Activated B cell treated with CpG ODN at 0.5 μM for 24 hours (primary cell): ENCODE measurements at regions of chr6 and their contacts with region 1.

Region 1: DNA sequence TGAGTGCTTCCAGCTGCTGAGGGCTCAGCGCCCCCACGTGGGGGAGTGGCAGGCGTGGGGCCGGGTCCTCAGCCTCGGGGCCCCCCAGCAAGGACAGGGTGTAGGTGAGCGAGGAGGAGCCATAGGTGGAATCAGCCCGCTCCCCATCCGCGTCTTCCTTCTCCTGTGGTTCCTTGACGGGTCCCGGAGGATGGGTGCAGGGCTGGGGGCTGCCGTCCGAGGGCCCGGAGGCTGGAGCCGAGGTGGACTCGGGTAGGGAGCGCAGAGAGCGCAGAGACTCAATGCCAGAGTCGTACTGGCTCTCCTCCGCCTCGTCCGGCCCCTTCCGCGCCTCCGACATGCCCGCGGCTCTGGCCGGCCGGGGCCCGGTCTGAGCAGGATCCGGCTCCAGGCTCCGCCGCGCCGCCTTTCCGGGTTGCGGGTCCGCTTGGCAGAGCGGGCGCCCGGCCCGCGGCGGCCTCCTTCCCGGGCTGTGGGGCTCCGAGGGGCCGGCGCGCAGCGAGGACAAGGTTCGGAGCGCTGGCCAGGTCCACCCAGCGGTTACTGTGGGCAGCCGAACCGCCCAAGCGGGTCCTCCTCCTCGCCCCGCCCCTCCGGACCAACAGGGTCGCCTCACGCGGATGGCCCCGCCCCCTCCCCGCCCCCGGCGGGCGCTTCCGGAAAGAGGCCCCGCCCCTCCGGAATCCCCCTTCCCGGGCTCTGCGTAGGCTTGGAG is at the start of gene NFKBIE:
- DNase-seq: peak; percentile 99
- ATAC-seq: peak; percentile 50
- H3K4me3 Mint-ChIP-seq: peak within 1 kb of the TSS; percentile 100
- H3K27ac Mint-ChIP-seq: peak within 1 kb of the TSS; percentile 99
- H3K4me1 Mint-ChIP-seq: peaks cover 77% of the 10 kb centered on the region
- H3K27me3 Mint-ChIP-seq: peaks cover 4% of the 10 kb centered on the region
- CTCF ChIP-seq: no peak
- total RNA-seq, gene NFKBIE: 94.7 and 99.2 TPM in 2 replicates

Region 2: GRCh38 chr6:43174263-43175112 is 1090.7 kb before region 1 on chr6:
- CTCF ChIA-PET with region 1: no interaction called
- POLR2A ChIA-PET with region 1: no interaction called
- intact Hi-C with region 1: loop called (anchors 5 kb)
- DNase-seq: peak; percentile 77
- ATAC-seq: peak; percentile 71
- H3K4me3 Mint-ChIP-seq: peak overlapping the region; percentile 73
- H3K27ac Mint-ChIP-seq: peak overlapping the region; percentile 90
- H3K4me1 Mint-ChIP-seq: peaks cover 48% of the 10 kb centered on the region
- H3K27me3 Mint-ChIP-seq: no peaks in the 10 kb centered on the region
- CTCF ChIP-seq: no peak

Region 3: GRCh38 chr6:43714311-43715055 is 550.7 kb before region 1 on chr6:
- CTCF ChIA-PET with region 1: no interaction called
- POLR2A ChIA-PET with region 1: interaction called, 5 read pairs
- intact Hi-C with region 1: loop called (anchors 10 kb)
- DNase-seq: peak; percentile 65
- ATAC-seq: peak; percentile 15
- H3K4me3 Mint-ChIP-seq: peak overlapping the region; percentile 81
- H3K27ac Mint-ChIP-seq: peak overlapping the region; percentile 91
- H3K4me1 Mint-ChIP-seq: peaks cover 60% of the 10 kb centered on the region
- H3K27me3 Mint-ChIP-seq: no peaks in the 10 kb centered on the region
- CTCF ChIP-seq: no peak

Region 4: DNA sequence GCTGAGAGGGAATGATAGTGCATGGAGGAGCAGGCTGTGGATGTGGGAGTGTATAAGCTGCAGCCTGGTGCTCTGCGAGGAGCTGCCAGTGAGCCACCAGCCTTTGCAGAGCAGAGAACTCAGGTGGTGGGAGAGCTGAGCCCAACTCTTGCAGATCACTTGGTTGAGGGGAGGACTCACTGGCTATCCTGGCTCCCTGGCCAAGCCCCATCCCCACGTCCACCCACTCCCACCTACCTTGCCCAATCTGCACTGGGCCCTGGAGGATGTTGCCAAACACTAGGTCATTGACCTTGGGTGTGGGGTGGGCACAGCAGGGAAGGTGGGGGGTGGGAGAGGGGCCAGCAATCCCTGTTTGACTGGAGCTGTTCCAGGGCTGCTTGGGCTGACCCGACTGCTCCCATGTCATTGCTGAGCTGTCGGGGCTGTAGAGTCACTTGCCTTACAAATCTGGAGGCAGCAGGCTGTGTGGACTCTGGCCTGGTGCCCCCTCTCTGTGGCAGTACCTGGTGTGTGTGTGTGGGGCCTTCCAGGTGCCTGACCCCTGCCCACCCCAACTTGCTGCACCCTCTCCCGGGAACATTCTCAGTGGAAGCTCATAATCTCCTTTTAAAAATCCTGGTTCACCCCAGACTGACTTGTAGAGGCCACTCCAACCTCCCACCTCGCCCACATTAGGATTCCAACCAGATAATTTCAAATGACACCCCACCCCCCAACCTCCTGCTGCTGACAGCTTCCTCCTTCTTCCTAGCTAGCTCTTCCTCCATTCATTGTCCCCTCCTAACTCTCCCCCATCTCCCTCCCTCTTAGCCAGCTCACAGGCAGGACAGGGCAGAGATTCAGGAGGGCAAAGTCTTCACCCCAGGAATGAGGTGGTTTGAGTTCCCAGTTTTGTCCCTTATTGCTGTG is 300.2 kb before region 1 on chr6:
- CTCF ChIA-PET with region 1: no interaction called
- POLR2A ChIA-PET with region 1: no interaction called
- intact Hi-C with region 1: no loop called
- DNase-seq: no peak
- ATAC-seq: no peak
- H3K4me3 Mint-ChIP-seq: no peak overlapping the region
- H3K27ac Mint-ChIP-seq: no peak overlapping the region
- H3K4me1 Mint-ChIP-seq: no peaks in the 10 kb centered on the region
- H3K27me3 Mint-ChIP-seq: peaks cover 19% of the 10 kb centered on the region
- CTCF ChIP-seq: no peak

Region 5: DNA sequence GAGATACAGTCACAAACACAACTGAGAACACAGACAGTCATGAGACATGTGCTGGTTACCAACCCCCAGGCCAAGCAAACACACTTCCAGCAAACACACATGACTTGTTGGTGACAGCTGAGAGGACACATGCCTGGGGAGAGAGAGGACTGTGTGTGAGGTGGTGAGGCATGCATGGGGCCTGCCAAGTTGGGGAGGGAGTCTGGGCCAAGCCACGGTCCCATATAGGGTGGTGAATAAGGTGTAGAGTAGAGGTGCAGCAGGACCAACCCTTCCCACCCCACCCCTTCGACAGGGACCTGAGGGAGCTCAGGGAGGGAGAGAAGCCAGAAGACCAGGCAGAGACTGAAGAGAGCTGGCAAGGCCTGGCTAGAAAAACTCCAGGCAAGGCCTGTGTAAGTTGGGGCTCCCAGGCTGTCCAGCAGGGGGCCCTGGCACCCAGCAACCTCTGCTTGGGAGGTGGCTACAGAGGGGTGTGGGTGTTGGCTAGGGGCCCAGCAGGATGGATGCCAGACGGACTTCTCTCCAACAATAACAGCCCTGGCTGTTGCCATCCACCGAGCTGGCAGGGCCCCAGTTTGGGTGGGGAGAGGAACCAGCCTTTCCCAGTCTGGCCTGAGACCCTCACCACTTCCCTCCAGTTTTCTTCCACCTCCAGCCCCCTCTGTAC is 43.7 kb before region 1 on chr6:
- CTCF ChIA-PET with region 1: interaction called, 6 read pairs
- POLR2A ChIA-PET with region 1: interaction called, 7 read pairs
- intact Hi-C with region 1: loop called (anchors 1 kb)
- DNase-seq: peak; percentile 53
- ATAC-seq: peak; percentile 51
- H3K4me3 Mint-ChIP-seq: no peak overlapping the region
- H3K27ac Mint-ChIP-seq: no peak overlapping the region
- H3K4me1 Mint-ChIP-seq: peaks cover 39% of the 10 kb centered on the region
- H3K27me3 Mint-ChIP-seq: no peaks in the 10 kb centered on the region
- CTCF ChIP-seq: no peak

Region 6: DNA sequence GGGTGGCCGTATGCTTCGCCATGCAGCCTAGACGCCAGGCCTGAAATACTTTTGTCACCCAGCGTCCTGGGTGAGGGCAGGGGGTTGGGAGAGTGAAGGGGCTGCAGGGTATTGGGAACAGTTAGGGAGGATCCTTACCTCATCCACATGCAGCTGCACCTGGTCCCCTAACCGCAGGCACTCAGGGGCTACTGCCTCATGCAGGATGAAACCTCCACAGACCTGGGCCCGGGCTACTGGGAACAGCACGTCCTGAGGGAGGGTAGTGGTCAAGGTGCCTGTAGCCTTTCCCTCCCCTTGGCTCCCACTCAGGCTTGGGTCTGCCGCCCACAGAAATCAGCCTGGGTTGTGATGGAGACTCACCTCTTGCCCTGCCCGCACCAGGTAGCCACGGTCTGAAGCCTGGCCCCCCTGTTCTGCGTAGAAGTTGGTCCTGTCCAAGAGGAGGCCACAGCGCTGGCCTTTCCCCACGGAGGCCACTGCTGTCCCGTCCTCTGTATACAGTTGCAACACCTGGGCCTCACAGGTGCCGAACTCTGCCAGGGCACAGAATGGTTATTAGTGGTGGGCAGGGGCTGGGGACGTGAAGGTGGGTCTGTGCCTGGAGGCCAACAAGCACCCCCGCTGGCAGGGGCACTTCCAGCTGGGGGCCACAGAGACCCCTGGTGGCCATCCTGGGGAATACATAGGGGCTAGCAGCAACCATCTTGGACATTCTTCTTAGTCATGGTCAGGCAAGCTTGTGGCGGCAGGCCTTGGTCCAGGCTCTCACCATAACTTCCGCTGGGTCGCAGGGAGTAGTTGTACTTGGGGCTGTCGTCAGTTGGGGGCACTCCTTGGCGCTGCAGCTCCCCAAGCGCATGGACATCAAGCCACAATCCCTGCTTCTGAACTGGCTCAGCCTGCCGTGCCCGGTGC is 39.4 kb after region 1 on chr6:
- CTCF ChIA-PET with region 1: interaction called, 81 read pairs
- POLR2A ChIA-PET with region 1: interaction called, 6 read pairs
- intact Hi-C with region 1: loop called (anchors 1 kb)
- DNase-seq: peak; percentile 47
- ATAC-seq: peak; percentile 93
- H3K4me3 Mint-ChIP-seq: no peak overlapping the region
- H3K27ac Mint-ChIP-seq: no peak overlapping the region
- H3K4me1 Mint-ChIP-seq: no peaks in the 10 kb centered on the region
- H3K27me3 Mint-ChIP-seq: no peaks in the 10 kb centered on the region
- CTCF ChIP-seq: peak; percentile 33

Region 7: DNA sequence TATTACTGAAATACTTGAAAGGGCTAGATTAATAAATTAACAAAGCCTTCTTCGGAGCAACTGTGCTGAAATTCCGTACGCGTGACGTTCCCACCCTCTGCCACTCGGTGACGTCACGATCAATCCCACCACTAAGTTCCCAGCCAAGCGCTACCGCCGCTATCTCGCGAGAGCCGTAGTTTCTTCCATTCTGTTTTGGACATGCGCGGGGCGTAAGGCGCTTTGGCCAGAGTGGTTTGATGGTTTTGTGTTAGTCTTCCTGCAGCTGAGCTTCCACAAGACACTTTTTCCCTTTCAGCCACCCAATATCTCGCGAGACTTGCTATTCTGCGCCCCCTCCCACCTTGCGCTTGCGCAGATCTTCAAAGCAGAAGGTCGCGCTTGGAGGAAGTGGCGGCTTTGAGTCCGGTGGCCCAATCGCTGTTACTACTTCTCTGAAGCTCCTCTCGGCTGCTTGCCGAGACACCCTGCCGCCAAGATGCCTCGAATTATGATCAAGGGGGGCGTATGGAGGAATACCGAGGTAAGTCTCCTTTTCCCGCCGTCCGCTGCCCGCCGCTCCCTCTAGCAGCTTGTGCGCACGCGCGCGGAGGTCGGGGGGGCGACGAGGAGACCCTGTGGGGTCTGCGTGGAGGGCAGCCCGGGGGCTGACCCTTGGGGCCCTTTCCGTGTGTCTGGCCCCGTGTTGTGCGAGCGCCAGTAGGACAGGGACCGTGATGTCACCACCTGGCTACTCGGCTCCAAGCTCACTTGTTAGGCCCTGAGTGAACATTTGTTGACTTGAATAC is 122.4 kb after region 1 on chr6 and contains the start of gene CDC5L:
- CTCF ChIA-PET with region 1: no interaction called
- POLR2A ChIA-PET with region 1: interaction called, 11 read pairs
- intact Hi-C with region 1: loop called (anchors 1 kb)
- DNase-seq: peak; percentile 82
- ATAC-seq: peak; percentile 91
- H3K4me3 Mint-ChIP-seq: peak within 1 kb of the TSS; percentile 94
- H3K27ac Mint-ChIP-seq: peak within 1 kb of the TSS; percentile 96
- H3K4me1 Mint-ChIP-seq: peaks cover 41% of the 10 kb centered on the region
- H3K27me3 Mint-ChIP-seq: no peaks in the 10 kb centered on the region
- CTCF ChIP-seq: no peak
- total RNA-seq, gene CDC5L: 20.0 and 20.2 TPM in 2 replicates